HEK293 (cell line): ENCODE measurements at regions of chr14 and their contacts with region 1.

Region 1: DNA sequence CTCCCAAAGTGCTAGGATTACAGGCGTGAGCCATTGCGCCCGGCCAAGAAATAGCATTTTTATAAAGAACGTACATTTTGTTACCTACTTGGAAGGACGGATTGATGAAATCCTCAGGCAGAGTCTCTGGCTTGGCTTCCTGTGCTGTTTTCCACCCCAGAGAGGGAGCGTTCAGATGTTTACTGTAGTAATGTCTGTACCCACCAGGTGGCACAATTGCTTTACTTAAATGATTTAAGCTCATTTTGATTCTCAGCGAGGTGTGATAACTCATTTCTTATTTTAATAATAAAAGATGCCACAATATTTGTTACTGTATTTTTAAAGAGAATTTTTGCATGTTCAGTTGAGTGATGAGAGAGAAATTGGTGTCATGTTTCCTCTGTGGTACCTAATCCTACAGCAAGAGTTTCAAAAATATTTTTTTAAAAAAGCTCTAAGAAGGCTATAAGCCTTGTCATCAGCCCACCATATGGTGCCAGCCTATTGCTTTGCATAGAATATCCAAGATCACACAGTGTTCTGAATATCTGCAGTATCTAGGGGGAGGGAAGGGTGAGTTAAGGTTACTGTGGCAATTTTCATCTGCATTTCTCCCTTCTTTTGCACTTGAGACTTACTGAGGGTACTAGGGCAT is 82.6 kb upstream of the TRAF3 start:
- H3K4me3 ChIP-seq: no peak overlapping the region
- H3K27ac ChIP-seq: no peak overlapping the region
- H3K4me1 ChIP-seq: peaks cover 3% of the 10 kb centered on the region
- CTCF ChIP-seq: 0 out of 2 replicates have a peak, but pooled peaks have one; percentile 13

Region 2: DNA sequence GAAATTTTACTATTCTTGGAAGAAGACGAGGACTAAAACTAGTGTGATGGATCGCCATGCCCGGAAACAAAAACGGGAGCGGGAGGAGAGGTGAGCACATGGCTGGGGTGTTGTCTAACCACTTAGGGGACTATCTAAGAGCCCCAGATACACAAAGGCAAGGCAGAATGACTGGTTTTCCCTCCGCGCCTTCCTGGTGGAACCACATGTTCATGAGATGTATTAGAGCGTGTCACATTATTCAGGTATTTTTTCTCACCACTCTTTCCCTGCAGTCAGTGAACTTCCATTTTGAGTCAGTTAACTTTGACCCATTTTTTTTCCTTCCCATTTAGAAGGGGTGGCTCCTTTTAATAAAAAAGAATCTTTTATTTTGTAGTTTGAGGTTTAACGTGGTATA is 13.8 kb after region 1 on chr14:
- CTCF ChIA-PET with region 1: interaction called, 12 read pairs
- POLR2A ChIA-PET with region 1: interaction called, 3 read pairs
- H3K4me3 ChIP-seq: no peak overlapping the region
- H3K27ac ChIP-seq: no peak overlapping the region
- H3K4me1 ChIP-seq: no peaks in the 10 kb centered on the region
- CTCF ChIP-seq: no peak

Region 3: GRCh38 chr14:102768223-102769048 is 73.8 kb after region 1 on chr14:
- CTCF ChIA-PET with region 1: interaction called, 14 read pairs
- POLR2A ChIA-PET with region 1: no interaction called
- H3K4me3 ChIP-seq: no peak overlapping the region
- H3K27ac ChIP-seq: no peak overlapping the region
- H3K4me1 ChIP-seq: no peaks in the 10 kb centered on the region
- CTCF ChIP-seq: no peak

Region 4: GRCh38 chr14:102917469-102918211 is 223.0 kb after region 1 on chr14:
- CTCF ChIA-PET with region 1: interaction called, 21 read pairs
- POLR2A ChIA-PET with region 1: interaction called, 3 read pairs
- H3K4me3 ChIP-seq: no peak overlapping the region
- H3K27ac ChIP-seq: no peak overlapping the region
- H3K4me1 ChIP-seq: no peaks in the 10 kb centered on the region
- CTCF ChIP-seq: peak; percentile 64; the same call in 1 of the 2 replicates